BJ (cell line): ENCODE measurements at regions of chr5 and their contacts with region 1.

Region 1: GRCh38 chr5:96868603-96869371 is 7.5 kb upstream of the ERAP2 start:
- DNase-seq: no peak
- H3K4me3 ChIP-seq: no peak overlapping the region
- H3K27me3 ChIP-seq: peaks cover 2% of the 10 kb centered on the region; the same call in 1 of the 2 replicates
- CTCF ChIP-seq: peak; percentile 98

Region 2: DNA sequence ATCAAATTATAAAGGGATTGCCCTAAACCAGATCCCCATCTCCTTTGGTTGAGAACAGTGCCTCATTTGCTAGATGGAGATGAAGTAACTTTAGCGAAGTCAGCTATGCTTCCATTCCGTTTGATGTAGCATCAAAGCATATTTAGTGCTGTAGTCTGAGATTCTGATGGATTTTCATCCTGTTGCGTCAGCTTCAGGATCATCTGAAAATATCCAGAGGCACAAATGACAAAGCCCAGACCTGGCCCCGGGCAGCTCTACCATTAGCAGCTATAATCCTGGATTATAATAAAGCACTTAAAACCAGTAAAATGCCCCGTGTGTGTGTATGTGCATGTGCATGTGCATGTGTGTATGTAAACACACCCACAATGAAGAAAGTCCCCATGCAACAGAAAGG is 105.8 kb before region 1 on chr5:
- CTCF ChIA-PET with region 1: no interaction called
- POLR2A ChIA-PET with region 1: no interaction called
- DNase-seq: no peak
- H3K4me3 ChIP-seq: no peak overlapping the region
- H3K27me3 ChIP-seq: no peaks in the 10 kb centered on the region
- CTCF ChIP-seq: no peak

Region 3: DNA sequence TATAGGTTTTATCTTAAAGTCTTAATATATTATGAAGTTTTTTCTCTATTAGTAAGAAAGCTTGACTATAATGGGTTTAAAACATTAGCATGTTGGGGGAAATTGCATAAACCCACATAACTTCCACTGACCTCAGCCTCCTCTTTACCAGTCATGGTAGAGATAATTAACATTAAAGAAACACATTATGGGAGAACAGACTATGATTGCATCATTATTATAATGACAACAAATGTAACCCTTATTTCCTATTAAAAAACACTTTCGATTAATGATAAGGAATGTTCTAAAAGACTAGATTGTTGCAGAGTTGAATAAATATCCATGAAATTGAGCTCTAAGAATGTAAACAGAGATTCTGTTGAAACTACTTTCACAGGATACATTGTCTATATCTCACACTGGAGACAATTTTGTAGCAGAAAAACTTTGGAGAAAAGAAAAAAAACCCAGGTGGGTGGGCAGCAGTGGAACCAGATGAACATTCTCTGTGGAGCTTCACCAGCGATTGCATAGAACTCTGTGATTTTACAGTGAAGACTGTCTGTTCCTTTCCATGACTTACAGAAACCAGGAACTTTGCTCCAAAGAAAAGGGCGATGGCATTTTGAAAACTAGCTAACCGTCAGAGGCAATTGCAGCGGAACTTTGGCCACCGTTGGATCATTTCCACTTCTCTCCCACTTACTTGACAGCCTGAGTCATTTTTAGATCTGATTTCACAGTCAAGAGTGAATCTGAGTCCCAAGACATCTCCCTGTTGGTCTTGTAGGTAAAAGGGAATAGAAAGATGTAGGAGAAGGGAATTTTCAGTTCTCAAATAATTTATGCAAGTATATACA is 13.5 kb before region 1 on chr5:
- CTCF ChIA-PET with region 1: interaction called, 18 read pairs
- POLR2A ChIA-PET with region 1: no interaction called
- DNase-seq: no peak
- H3K4me3 ChIP-seq: no peak overlapping the region
- H3K27me3 ChIP-seq: no peaks in the 10 kb centered on the region; the same call in 1 of the 2 replicates
- CTCF ChIP-seq: no peak

Region 4: GRCh38 chr5:97142521-97143254 is 273.9 kb after region 1 on chr5 and contains the start of gene LIX1:
- CTCF ChIA-PET with region 1: interaction called, 44 read pairs
- POLR2A ChIA-PET with region 1: no interaction called
- DNase-seq: no peak
- H3K4me3 ChIP-seq: no peak within 1 kb of the TSS
- H3K27me3 ChIP-seq: peaks cover 3% of the 10 kb centered on the region
- CTCF ChIP-seq: peak; percentile 63
- polyA plus RNA-seq, gene LIX1: not detected in 2 replicates

Region 5: DNA sequence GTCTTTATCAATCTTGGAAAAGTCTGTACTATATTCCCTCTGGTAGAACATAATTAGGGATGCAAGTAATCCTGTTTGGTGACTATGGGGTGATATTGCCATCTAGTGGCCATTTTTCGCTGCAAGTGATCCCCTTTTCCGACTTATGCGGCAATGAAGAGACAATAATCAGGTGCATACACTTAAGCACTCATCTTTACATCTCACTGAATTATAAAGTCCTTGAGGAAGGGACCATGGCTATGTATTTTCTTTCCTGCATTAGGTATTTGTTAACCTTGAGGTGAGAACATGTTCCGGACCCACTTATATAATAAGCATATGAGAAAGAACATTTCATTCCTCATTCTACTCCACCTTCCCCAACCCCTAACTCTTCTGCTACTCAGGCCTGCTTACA is 293.3 kb after region 1 on chr5:
- CTCF ChIA-PET with region 1: interaction called, 83 read pairs
- POLR2A ChIA-PET with region 1: no interaction called
- DNase-seq: peak; percentile 25
- H3K4me3 ChIP-seq: no peak overlapping the region
- H3K27me3 ChIP-seq: no peaks in the 10 kb centered on the region
- CTCF ChIP-seq: peak; percentile 85